Transverse colon (tissue), 4 donors: ENCODE measurements at regions of chr7 and their contacts with region 1.

Region 1: GRCh38 chr7:37420946-37421695 is 27.5 kb downstream of the ELMO1 start:
- DNase-seq: no peak
- H3K4me3 ChIP-seq: no peak overlapping the region
- H3K27ac ChIP-seq: peak overlapping the region; percentile 9 to 41 (median 28)
- H3K4me1 ChIP-seq: peaks cover 3 to 23% (median 5%) of the 10 kb centered on the region in 4 donors
- H3K27me3 ChIP-seq: no peaks in the 10 kb centered on the region
- CTCF ChIP-seq: no peak
- EP300 ChIP-seq: no peak
- POLR2A ChIP-seq: no peak

Region 2: GRCh38 chr7:37462138-37462537 is 41.0 kb after region 1 on chr7:
- in situ Hi-C with region 1: no loop called
- intact Hi-C with region 1: loop called (anchors 1 kb)
- DNase-seq: no peak
- H3K4me3 ChIP-seq: no peak overlapping the region
- H3K27ac ChIP-seq: no peak overlapping the region
- H3K4me1 ChIP-seq: no peaks in the 10 kb centered on the region
- H3K27me3 ChIP-seq: no peaks in the 10 kb centered on the region
- CTCF ChIP-seq: no peak
- EP300 ChIP-seq: no peak
- POLR2A ChIP-seq: no peak